ENCODE measurements at regions of chr19 and their contacts with region 1.

Region 1: DNA sequence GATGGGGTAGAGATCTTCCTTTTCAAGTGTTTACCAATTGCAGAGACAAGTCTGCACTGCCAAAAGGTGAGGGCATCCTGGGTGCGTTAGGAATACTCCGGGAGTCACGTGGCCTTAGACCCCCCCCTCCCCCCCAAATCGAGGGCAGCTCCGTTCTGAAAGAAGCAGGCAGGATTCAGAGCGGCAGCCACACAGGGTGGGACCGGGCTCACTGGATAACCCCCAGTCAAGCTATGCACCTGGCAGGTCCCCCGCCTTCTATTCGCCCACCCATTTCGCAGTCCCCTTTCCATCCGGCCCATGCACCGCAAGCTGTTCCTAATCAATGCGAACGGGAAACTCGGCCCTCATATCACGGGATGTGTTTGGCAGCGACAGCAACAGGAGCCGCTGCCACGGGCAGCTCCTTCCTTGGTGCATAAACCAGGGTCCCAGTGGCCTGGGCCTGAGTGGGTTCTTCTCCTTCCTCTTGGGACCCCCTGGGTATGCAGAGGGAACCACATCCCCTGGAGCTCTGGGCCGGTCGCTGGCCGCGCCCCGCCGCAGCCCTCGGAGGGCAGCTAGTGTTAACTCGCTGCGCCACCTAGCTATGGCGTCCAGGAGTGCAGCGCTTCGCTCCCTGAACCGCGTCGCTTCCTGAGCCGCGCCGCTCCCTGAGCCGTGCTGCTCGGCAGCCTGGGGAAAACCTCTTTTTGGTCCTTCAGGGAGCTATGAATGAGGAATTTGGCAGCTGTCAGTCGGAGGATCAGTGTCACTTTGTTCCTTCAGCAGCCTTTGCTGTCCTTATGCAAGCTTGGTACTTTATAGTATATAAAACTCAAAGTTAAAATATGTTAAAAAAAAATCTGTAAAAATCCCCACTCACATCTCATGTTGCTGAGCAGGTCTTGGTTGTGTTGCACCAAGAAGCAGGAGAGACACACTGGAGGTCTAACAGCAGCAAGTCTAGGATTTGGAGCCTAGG is 41.4 kb downstream of the LYL1 start:
- DNase-seq: peak; percentile 83
- ATAC-seq: peak; percentile 96
- H3K4me3 Mint-ChIP-seq: peak overlapping the region; percentile 58
- H3K27ac Mint-ChIP-seq: no peak overlapping the region
- H3K4me1 Mint-ChIP-seq: peaks cover 8% of the 10 kb centered on the region
- H3K27me3 Mint-ChIP-seq: peaks cover 32% of the 10 kb centered on the region

Region 2: GRCh38 chr19:12983542-12984142 is 77.6 kb before region 1 on chr19:
- CTCF ChIA-PET with region 1: interaction called, 204 read pairs
- DNase-seq: peak; percentile 77
- ATAC-seq: peak; percentile 77
- H3K4me3 Mint-ChIP-seq: no peak overlapping the region
- H3K27ac Mint-ChIP-seq: no peak overlapping the region
- H3K4me1 Mint-ChIP-seq: peaks cover 2% of the 10 kb centered on the region
- H3K27me3 Mint-ChIP-seq: peaks cover 7% of the 10 kb centered on the region

Region 3: DNA sequence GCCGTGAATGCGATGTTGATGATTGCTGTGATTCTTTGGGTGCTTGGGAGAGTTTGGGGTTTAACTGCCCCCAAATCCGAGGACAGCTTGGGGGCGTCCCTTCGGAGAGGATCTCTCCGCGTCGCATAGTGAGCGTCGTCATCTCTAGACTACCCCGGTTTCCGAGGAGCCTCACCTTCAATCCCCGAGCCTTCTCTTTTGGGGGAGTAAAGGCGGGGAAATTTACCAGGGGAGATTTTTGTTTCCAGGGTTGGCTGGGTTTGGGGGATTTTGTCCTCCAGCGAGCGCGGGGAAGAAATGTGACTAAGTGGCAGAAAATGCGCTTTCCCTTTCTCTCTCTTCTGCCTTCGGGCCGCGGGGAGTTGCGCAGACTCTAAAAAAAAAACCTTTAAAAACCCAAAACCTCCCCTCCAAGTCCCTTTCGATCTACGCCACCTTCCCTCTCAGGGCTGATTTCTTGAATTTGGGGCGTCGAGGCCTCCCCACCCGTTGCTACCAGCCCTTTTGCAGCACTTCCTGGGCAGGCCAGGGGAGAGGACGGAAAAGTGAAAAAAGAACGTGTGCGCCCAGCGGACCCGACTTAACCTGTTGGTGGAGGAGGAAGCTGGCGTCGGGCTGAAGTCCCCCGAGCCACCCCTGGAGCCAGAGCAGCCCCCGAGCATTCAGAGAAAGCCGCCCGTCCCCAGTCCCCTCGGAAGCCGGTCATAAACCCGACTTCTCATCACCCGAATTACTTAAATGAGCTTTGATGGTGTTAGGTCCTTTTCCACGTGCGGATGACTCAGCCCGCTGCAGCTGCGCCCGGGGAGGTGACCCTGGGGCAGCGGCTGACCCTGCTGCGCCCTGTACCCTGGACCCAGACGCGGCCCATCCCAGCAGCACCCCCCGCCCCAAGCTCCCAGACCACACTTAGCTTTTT is 48.3 kb before region 1 on chr19:
- CTCF ChIA-PET with region 1: interaction called, 10 read pairs
- DNase-seq: peak; percentile 51
- ATAC-seq: peak; percentile 33
- H3K4me3 Mint-ChIP-seq: peak overlapping the region; percentile 38
- H3K27ac Mint-ChIP-seq: peak overlapping the region; percentile 58
- H3K4me1 Mint-ChIP-seq: peaks cover 11% of the 10 kb centered on the region
- H3K27me3 Mint-ChIP-seq: peaks cover 84% of the 10 kb centered on the region

Region 4: DNA sequence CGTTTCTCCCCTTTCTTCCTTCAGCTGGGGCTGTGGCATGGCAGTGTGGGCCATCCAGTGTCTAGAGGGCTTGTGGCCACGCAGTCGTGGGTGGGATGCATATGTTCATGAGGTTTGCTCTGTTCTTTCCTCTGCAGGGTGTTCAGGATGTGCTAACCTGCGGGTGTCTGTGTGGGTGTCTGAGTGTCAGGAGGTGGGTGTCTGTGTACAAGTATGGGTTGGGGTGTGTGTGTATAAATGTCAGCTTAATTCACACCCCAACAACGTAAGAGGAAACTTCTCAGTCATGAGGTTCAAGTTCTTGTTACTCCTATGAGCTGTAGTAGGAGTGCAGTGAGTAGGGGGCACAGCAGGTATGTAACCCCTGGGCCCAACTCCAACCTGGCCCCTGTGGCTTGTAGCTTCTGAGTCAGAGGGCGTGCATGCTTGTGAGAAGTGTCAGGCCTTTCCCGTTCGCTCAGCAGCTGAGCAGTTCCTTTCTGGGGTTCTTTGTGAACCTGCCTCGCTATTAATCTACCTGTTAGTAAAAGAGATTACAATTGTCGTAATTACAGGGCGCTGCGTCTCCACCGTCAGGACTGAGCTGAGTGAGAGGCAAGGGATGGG is 16.9 kb before region 1 on chr19:
- CTCF ChIA-PET with region 1: interaction called, 40 read pairs
- DNase-seq: peak; percentile 56
- ATAC-seq: peak; percentile 75
- H3K4me3 Mint-ChIP-seq: no peak overlapping the region
- H3K27ac Mint-ChIP-seq: no peak overlapping the region
- H3K4me1 Mint-ChIP-seq: peaks cover 24% of the 10 kb centered on the region
- H3K27me3 Mint-ChIP-seq: peaks cover 12% of the 10 kb centered on the region

Region 5: DNA sequence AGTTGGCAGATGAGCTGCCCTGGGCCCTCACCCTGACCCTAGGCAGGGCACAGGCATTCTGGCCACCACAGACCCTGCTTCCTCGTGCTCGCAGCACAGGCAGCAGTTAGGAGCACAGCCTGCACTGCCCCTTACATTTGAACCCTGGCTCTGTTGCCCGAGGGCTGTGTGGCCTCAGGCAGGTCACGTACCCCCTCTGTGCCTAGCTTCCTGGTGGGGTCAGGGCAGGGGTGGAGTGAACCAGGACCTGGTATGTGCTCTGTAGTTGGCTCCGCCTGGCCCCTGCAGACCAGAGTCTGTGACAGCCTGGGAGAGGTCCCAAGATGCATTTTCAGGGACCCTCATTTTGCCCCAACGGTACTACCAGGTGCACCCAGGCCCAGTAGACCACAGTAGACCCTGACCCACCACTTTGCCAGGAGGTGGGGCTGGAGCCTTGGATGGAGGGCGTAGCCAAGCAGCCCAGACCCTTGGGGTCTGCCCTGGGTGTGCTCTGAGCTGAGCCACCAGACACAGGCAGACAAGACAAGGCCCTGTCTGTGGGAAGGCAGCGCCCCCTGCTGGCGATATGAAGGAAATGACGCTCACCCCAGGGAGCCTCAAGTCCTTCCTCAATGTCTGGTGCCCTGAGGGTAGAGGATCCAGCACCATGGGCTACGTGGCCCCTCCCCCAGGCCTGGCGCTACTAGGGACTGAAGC is 32.3 kb after region 1 on chr19:
- CTCF ChIA-PET with region 1: interaction called, 33 read pairs
- DNase-seq: peak; percentile 85
- ATAC-seq: peak; percentile 86
- H3K4me3 Mint-ChIP-seq: no peak overlapping the region
- H3K27ac Mint-ChIP-seq: no peak overlapping the region
- H3K4me1 Mint-ChIP-seq: peaks cover 12% of the 10 kb centered on the region
- H3K27me3 Mint-ChIP-seq: peaks cover 42% of the 10 kb centered on the region

Region 6: GRCh38 chr19:13117772-13118423 is 56.7 kb after region 1 on chr19 and contains the start of gene NACC1:
- CTCF ChIA-PET with region 1: no interaction called
- DNase-seq: peak; percentile 93
- ATAC-seq: peak; percentile 88
- H3K4me3 Mint-ChIP-seq: peak within 1 kb of the TSS; percentile 93
- H3K27ac Mint-ChIP-seq: peak within 1 kb of the TSS; percentile 96
- H3K4me1 Mint-ChIP-seq: peaks cover 56% of the 10 kb centered on the region
- H3K27me3 Mint-ChIP-seq: no peaks in the 10 kb centered on the region
- total RNA-seq, gene NACC1: 82.2 to 96.0 TPM

Region 7: DNA sequence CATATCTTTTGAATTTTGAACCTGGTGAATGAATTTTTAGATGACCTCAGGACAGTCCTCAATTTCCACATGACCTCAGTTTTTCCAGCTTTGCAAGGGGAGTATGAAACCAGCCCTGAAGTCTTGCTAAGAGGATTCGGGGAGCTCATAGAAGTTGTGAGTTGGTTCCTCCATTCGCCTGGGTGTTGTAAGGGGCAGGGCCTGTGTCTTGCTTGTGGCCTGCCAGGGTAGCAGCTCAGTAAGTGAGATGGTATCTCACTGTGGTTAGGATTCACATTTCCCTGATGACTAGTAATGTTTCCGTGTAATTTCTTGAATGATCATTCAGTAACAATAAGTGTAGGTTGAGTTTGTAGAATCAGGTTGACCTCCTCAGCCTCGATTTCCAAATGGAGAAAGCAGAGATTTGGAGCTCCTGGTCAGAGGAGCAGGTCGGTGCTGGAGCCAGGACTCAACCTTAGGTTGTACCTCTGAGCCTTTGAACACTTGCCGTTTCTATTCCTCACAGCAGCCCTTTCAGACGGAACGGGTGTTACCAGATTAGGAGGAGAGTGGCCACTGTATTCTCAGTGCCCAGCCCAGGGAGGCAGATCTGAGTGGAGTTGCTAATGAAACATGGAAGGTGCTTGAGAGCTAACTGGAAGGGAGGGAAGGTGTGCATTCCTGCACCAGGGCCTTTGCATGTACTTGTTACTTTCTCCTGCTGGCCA is 71.4 kb after region 1 on chr19:
- CTCF ChIA-PET with region 1: no interaction called
- DNase-seq: peak; percentile 84
- ATAC-seq: peak; percentile 95
- H3K4me3 Mint-ChIP-seq: peak overlapping the region; percentile 18
- H3K27ac Mint-ChIP-seq: peak overlapping the region; percentile 77
- H3K4me1 Mint-ChIP-seq: peaks cover 29% of the 10 kb centered on the region
- H3K27me3 Mint-ChIP-seq: no peaks in the 10 kb centered on the region

Measured in activated CD8-positive, alpha-beta memory T cell treated with anti-CD3 and anti-CD28 coated beads, Interleukin-2, amount 10 ng/mL, durations not matched to agents 7 days and 5 days (primary cell).